Ovary (tissue), 10 donors: ENCODE measurements at regions of chr12 and their contacts with region 1.

Region 1: DNA sequence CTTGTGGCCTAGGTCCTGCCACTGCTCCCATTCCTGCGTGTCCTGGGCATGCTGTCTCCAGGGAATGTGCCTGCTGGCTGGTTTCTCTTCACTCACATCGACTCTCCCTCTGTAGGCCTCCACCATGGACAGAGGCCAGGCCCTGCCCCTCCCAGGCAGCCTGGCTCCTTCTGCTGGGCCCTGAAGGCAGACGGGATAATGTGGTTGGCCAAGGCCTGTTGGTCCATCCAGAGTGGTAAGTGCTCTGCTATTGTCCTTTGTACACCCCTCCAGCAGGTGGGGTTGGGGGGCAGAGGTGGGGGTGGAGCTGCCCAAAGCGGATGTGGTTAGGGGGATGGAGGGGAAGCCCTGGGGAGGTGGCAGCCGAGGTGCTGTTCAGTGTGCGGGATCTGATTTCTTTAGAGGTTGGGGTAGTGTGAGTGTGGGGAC is 9.5 kb upstream of the NR4A1 start:
- DNase-seq: peak; percentile 63 to 77 (median 69)
- H3K4me3 ChIP-seq: no peak overlapping the region
- H3K27ac ChIP-seq: peak overlapping the region; percentile 92 to 94
- H3K4me1 ChIP-seq: peaks cover 24% of the 10 kb centered on the region
- H3K27me3 ChIP-seq: no peaks in the 10 kb centered on the region
- CTCF ChIP-seq: no peak
- EP300 ChIP-seq: no peak
- POLR2A ChIP-seq: no peak

Region 2: DNA sequence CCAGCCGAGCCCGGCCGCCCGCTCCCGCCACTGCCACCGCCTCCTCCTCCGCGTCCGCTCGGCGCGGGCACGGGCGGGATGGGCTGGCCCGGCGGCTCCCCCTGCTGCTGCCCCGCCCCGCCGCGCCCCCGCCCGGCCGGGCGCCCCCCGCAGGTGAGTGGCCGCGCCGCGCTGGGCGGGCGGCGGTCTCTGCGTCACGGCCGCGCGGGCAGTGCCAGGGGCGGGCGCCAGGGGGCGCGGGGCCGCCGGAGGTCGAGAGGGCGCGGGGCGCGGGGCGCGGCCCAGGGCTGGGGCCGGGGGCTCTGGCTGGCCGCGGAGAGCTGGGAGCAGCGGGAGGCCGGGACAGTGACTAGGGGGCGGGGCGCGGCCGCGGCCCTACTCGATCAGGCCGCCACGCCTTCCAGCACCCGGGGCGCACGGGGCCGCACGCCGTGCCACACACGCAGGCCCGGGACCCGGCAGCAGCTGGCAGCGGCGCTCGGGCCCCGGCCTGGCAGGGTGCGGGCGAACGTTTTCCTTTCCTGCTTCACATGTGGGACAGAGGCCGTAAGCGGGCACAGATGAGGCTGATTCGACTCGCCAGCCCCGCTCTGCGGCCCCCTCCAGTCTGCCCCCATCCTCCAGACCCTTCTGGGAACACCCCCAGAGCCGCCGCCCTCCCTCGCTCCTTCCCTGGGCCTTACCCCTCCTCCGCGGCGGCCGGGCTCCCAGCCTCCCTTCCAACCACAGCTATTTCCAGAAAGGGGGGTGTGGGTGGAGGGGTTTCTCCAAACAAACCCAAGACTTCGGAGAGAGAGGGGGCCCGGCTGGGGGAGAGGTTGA is 1005.7 kb after region 1 on chr12:
- intact Hi-C with region 1: loop called in 1 of 4 experiments (anchors 10 kb)
- DNase-seq: peak; percentile 87 to 91 (median 89)
- H3K4me3 ChIP-seq: peak overlapping the region; percentile 80
- H3K27ac ChIP-seq: peak overlapping the region; percentile 96 to 99
- H3K4me1 ChIP-seq: peaks cover 44% of the 10 kb centered on the region
- H3K27me3 ChIP-seq: no peaks in the 10 kb centered on the region
- CTCF ChIP-seq: peak in 2 of 3 donors; percentile 35 to 36
- EP300 ChIP-seq: no peak
- POLR2A ChIP-seq: peak; percentile 56